Tibial artery (tissue), 4 donors: ENCODE measurements at regions of chr13 and their contacts with region 1.

Region 1: GRCh38 chr13:37127691-37128241 is 22.3 kb upstream of the CSNK1A1L start:
- DNase-seq: peak in 1 of 2 donors; percentile 25
- H3K4me3 ChIP-seq: no peak overlapping the region
- H3K27ac ChIP-seq: peak overlapping the region; percentile 21 to 45
- H3K4me1 ChIP-seq: peaks cover 0 to 17% (median 5%) of the 10 kb centered on the region in 4 donors
- H3K27me3 ChIP-seq: no peaks in the 10 kb centered on the region
- CTCF ChIP-seq: no peak

Region 2: DNA sequence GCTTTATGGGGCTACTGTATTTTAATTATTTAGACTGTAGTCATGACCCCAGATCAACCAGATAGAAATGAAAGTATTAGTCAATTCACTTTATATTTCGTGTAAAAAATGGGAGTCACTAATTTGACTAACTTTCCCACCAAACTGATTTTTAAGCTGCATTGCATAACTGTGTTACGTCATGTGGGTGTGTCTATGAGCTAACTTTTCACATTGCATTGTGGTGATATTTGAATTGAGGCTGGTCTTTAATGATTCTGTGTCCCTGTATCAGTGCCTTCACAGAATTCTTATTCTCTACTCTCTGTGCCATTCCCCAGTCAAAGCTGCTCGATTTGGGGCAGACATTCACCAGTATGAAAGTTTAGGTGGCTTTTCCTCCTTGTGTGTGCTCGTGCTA is 1478.6 kb before region 1 on chr13:
- intact Hi-C with region 1: loop called (anchors 10 kb)
- DNase-seq: no peak
- H3K4me3 ChIP-seq: no peak overlapping the region
- H3K27ac ChIP-seq: no peak overlapping the region
- H3K4me1 ChIP-seq: peaks cover 0 to 9% (median 0%) of the 10 kb centered on the region in 4 donors
- H3K27me3 ChIP-seq: no peaks in the 10 kb centered on the region
- CTCF ChIP-seq: no peak

Region 3: GRCh38 chr13:36606060-36606459 is 521.7 kb before region 1 on chr13:
- intact Hi-C with region 1: no loop called
- DNase-seq: no peak
- H3K4me3 ChIP-seq: no peak overlapping the region
- H3K27ac ChIP-seq: no peak overlapping the region
- H3K4me1 ChIP-seq: no peaks in the 10 kb centered on the region
- H3K27me3 ChIP-seq: no peaks in the 10 kb centered on the region
- CTCF ChIP-seq: no peak